ENCODE measurements at regions of chr10 and their contacts with region 1.

Region 1: GRCh38 chr10:11684717-11685645 is 57.2 kb upstream of the ECHDC3 start:
- DNase-seq: peak; percentile 83
- H3K4me3 Mint-ChIP-seq: peak overlapping the region; percentile 67
- H3K27ac Mint-ChIP-seq: peak overlapping the region; percentile 93
- H3K4me1 Mint-ChIP-seq: peaks cover 53% of the 10 kb centered on the region
- H3K27me3 Mint-ChIP-seq: peaks cover 12% of the 10 kb centered on the region
- CTCF ChIP-seq: no peak

Region 2: DNA sequence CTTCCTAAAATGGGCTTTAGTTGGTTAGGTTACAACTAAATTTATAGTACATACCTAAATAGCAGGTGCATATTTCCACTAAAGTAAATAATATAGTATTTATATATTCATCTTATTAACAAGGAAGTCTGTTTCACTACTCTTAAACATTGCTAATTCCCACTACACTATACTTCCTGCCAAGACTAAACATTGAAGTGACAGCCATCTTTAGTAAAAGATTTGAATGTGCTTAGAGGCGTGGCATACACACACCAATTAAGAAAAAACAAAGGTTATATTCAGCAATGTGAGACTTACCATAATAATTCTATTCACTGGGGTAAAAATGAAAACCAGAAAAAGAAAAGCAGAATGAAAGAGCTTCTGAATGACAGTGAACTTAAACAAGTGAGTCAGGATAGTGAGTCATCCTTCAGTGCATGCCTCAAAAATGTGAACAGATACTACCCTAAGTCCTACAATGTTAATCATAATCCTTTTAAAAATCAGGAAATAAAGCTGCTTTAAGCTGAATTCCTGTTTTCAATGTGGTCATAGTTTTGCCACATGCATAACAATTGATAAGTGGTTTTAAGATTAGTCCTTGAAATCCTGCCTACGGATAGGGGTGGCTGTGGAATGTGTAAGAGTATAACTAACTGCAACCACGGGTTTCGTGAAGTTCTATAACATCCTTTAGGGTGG is 132.9 kb before region 1 on chr10:
- CTCF ChIA-PET with region 1: no interaction called
- intact Hi-C with region 1: loop called (anchors 1 kb)
- DNase-seq: peak; percentile 24
- H3K4me3 Mint-ChIP-seq: peak overlapping the region; percentile 20
- H3K27ac Mint-ChIP-seq: peak overlapping the region; percentile 82
- H3K4me1 Mint-ChIP-seq: peaks cover 76% of the 10 kb centered on the region
- H3K27me3 Mint-ChIP-seq: no peaks in the 10 kb centered on the region
- CTCF ChIP-seq: no peak

Region 3: GRCh38 chr10:11611248-11612020 is 73.5 kb before region 1 on chr10 and contains the start of gene USP6NL:
- CTCF ChIA-PET with region 1: no interaction called
- intact Hi-C with region 1: loop called (anchors 2 kb)
- DNase-seq: peak; percentile 96
- H3K4me3 Mint-ChIP-seq: peak within 1 kb of the TSS; percentile 78
- H3K27ac Mint-ChIP-seq: peak within 1 kb of the TSS; percentile 86
- H3K4me1 Mint-ChIP-seq: peaks cover 17% of the 10 kb centered on the region
- H3K27me3 Mint-ChIP-seq: no peaks in the 10 kb centered on the region
- CTCF ChIP-seq: no peak
- total RNA-seq, gene USP6NL: 25.3 and 27.5 TPM in 2 replicates

Region 4: DNA sequence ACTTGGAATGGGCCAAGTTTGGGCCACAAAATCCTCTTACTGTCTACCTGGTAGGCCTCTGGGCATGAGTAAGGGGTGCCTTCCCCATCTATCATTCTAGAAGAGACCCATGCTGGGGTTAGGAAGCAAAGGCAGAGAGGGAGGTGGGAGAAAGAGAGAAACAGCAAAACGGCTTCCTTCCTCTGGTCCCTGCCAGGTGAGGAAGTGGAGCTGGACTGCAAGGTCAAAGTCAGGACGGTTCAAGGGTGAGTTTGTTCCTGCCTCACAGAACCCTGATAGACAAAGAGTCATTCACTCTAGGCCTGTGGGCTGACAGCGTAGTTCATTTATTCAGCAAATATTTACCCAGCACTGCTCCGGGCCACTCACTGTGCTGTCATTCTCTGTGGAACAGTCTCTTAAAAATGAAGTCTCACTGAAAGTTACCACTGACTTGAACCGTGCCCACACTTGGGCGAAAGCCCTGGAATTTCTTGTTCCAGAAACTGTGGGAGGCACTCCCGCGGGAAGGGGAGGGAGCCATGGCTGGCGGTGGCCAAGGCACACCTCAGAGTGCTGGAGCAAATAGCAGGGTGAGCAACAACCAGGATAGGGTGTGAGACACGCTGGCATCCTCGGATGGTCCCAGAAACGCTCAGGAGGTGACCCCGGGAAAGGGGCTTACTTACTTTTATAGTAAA is 31.0 kb after region 1 on chr10:
- CTCF ChIA-PET with region 1: no interaction called
- intact Hi-C with region 1: loop called (anchors 2 kb)
- DNase-seq: peak; percentile 43
- H3K4me3 Mint-ChIP-seq: peak overlapping the region; percentile 49
- H3K27ac Mint-ChIP-seq: peak overlapping the region; percentile 12
- H3K4me1 Mint-ChIP-seq: peaks cover 34% of the 10 kb centered on the region
- H3K27me3 Mint-ChIP-seq: no peaks in the 10 kb centered on the region
- CTCF ChIP-seq: no peak

Measured in Calu3 (cell line).